Panc1 (cell line): ENCODE measurements at regions of chr1 and their contacts with region 1.

Region 1: DNA sequence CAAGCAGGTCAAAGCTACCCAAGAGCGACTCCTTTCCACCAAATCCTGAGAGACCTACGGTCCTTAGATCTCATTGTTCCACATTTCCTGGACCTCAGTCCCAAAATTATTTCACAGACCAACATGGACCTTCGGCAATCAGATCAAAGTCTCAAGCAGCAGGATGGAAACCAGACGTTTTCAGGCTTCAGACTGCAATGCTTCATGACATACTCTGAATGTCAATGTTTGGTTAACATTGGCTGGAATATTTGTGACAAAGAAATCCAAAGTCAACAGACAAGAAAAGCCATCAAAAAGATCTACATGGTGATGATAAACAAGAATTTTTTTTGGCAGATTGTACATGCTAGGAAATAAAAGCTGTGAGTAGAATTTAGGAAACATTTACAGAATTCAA is 1057.3 kb downstream of the ADGRL2 start:
- DNase-seq: no peak
- ATAC-seq: no peak
- H3K4me3 ChIP-seq: no peak overlapping the region
- H3K27ac ChIP-seq: no peak overlapping the region
- H3K4me1 ChIP-seq: no peaks in the 10 kb centered on the region
- H3K27me3 ChIP-seq: no peaks in the 10 kb centered on the region
- CTCF ChIP-seq: no peak

Region 2: GRCh38 chr1:81391125-81391828 is 1466.8 kb before region 1 on chr1:
- CTCF ChIA-PET with region 1: no interaction called
- POLR2A ChIA-PET with region 1: no interaction called
- in situ Hi-C with region 1: no loop called
- intact Hi-C with region 1: no loop called
- DNase-seq: no peak
- ATAC-seq: no peak
- H3K4me3 ChIP-seq: no peak overlapping the region
- H3K27ac ChIP-seq: no peak overlapping the region
- H3K4me1 ChIP-seq: no peaks in the 10 kb centered on the region
- H3K27me3 ChIP-seq: no peaks in the 10 kb centered on the region
- CTCF ChIP-seq: no peak

Region 3: DNA sequence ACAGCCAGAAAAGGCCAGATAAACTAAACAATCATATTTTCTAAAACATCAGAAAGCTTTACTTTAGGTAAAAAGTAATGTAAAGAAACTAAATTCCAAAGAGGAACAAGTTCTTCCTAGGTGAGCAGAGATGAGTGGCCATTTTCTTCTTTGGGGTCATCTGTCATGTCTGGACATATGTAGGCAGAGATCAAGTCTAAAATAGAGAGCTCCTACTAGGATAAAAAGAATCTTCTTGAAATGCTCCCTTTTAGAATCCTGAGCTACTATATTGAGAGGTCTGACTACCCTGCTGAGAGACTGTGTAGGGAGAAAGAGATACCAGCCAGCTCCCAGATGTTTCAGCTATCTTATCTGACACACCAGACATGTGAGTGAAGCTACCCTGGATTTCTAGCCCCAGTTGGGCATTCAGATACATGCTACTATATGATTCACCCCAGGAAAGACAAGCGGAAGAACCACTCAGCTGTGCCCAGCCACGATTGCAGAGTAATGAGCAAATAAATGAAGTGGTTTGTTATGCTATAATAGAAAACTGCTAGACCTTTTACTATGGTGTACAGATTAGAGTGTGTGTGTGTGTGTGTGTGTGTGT is 1060.8 kb after region 1 on chr1:
- CTCF ChIA-PET with region 1: interaction called, 12 read pairs
- POLR2A ChIA-PET with region 1: no interaction called
- in situ Hi-C with region 1: no loop called
- intact Hi-C with region 1: no loop called
- DNase-seq: no peak
- ATAC-seq: no peak
- H3K4me3 ChIP-seq: no peak overlapping the region
- H3K27ac ChIP-seq: no peak overlapping the region
- H3K4me1 ChIP-seq: no peaks in the 10 kb centered on the region
- H3K27me3 ChIP-seq: no peaks in the 10 kb centered on the region
- CTCF ChIP-seq: no peak